ENCODE measurements at regions of chr2 and their contacts with region 1.

Region 1: DNA sequence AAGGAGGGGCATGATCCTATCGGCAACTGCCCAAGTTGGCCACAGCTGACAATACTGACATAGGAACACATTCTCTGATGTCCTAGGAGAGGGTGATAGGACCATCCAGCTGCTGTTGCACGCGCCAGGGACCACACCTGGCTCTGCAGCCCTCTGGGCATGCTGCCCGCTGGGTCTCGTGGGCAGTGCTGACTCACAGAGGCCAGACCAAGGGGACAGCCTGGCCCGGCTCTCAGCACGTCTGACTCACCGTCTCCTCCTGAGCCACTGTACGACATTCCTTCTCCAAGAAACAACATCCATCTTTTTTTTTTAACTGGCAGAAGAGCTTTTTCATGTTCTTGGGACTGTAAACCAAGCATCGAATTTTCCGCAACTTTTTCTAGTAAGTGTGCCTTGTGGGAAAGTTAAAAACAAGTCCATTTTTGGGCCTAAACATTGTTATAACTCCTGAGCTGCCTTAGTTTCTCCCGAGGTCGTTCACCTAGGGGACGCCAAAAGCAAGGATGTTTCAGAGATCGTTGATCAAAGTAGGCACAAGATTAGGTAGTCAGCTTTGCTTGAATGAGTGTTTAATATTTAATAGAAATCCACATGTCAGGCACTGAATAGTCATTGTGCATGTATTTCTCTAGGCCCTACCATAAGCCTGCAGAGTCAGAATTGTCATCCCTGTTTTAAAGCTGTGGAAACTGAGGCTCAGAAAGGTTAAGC is 100.3 kb downstream of the TTC32 start:
- DNase-seq: peak; percentile 95

Region 2: DNA sequence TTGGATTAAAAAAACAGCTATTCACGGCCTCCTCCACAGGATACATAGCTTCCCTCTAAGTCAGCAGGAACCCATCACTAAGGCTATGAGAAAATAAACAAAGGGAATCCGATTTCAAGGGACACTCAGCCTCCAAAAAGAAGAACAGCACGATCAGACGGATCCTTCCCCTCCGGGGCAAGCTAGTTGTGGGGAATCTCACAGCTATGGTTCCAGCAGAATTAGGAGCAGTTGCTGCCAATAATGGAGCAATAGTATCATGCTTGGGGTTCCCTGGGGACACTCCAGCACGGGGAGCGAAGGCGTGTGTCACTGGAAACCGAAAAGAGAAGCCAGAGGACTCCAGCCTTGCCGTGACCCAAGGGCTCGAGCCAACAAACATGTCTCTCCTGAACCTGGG is 62.8 kb before region 1 on chr2:
- intact Hi-C with region 1: loop called in 1 of 2 experiments (anchors 10 kb)
- DNase-seq: peak; percentile 87

Measured in posterior vena cava (tissue), 2 donors.